ENCODE measurements at regions of chr2 and their contacts with region 1.

Region 1: DNA sequence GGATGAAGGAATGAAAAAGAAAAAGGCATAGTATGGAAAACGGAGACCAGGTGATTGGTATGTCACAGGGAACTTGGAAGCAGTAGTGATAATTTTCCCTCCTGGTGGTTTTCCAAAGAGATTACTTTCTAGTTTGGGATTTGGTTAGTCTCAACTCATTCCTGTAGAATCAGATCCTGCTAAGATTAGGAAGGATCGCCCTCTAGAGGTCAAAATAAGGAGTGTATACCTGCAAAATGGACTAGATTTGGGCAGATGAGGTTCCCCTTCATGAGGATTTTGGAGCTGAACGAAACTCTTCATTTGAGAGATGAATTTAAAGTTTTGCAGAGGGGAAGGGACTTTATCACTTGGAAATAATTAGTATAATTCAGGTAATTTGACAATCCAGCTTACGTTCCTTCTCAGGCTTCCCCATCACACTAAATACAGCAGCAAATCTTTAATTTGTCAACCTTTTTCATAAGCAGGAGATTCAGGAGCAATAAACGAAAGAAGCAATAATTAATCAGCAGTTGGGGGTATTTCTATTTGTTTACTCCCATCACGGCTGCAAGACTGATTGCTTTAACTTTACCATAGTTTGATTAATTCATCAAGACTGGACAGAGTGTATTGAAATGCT is 65.2 kb downstream of the CCDC195 start:
- DNase-seq: no peak
- ATAC-seq: peak in 3 of 4 donors; percentile 56 to 80 (median 64)
- H3K4me3 ChIP-seq: no peak overlapping the region
- H3K27ac ChIP-seq: no peak overlapping the region
- H3K4me1 ChIP-seq: no peaks in the 10 kb centered on the region
- H3K27me3 ChIP-seq: no peaks in the 10 kb centered on the region
- CTCF ChIP-seq: peak; percentile 85

Region 2: DNA sequence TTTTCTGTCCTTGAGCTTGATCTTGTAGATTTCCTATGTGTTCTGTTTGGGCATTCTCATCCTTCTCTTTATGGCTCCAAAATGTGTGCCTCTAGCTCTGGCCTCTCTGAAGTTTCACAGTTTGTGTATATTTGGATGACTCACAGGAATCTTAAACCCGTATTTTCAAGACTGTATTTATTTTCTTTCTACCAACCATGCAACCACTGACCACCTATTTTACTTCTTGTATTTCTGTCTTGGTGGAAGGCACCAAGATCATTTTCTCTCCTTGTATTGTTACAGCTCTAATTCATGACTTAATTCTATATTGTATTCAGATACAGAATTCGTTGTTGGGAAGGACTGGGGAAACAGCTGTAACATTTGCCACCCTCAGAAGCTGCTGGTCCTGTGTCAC is 1750.6 kb before region 1 on chr2:
- intact Hi-C with region 1: no loop called
- DNase-seq: no peak
- ATAC-seq: no peak
- H3K4me3 ChIP-seq: no peak overlapping the region
- H3K27ac ChIP-seq: peak overlapping the region; percentile 33
- H3K4me1 ChIP-seq: peaks cover 18% of the 10 kb centered on the region
- H3K27me3 ChIP-seq: no peaks in the 10 kb centered on the region
- CTCF ChIP-seq: no peak

Region 3: DNA sequence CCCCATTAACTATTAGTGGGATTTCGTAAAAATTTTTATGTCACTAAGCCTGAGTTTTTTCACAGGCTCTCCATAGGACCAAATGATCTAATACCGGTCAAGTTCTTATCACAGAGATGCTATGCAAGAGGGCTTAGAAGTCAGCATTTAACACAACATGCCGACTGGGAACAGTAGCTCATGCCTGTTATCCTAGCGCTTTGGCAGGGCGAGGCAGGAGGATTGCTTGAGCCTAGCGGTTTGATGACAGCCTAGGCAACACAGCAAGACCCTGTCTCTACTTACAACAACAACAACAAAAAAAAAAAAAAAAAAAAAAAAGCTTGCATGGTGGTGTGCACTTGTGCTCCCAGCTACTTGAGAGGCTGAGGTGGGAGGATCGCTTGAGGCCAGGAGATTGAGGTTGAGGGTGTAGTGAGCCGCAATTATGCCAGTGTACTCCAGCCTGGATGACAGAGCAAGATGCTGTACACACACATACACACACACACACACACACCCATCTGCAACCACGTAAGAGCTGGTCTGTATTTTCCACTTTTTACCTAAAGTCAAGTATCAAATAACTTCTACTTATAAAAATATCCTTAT is 181.5 kb before region 1 on chr2:
- intact Hi-C with region 1: loop called in 1 of 2 experiments (anchors 10 kb)
- DNase-seq: no peak
- ATAC-seq: peak in 3 of 4 donors; percentile 20 to 44 (median 36)
- H3K4me3 ChIP-seq: no peak overlapping the region
- H3K27ac ChIP-seq: no peak overlapping the region
- H3K4me1 ChIP-seq: no peaks in the 10 kb centered on the region
- H3K27me3 ChIP-seq: no peaks in the 10 kb centered on the region
- CTCF ChIP-seq: no peak

Region 4: GRCh38 chr2:224638301-224638823 is 12.6 kb before region 1 on chr2:
- intact Hi-C with region 1: no loop called
- DNase-seq: no peak
- ATAC-seq: no peak
- H3K4me3 ChIP-seq: no peak overlapping the region
- H3K27ac ChIP-seq: no peak overlapping the region
- H3K4me1 ChIP-seq: no peaks in the 10 kb centered on the region
- H3K27me3 ChIP-seq: no peaks in the 10 kb centered on the region
- CTCF ChIP-seq: no peak